Lower leg skin (tissue), 4 donors: ENCODE measurements at regions of chr12 and their contacts with region 1.

Region 1: DNA sequence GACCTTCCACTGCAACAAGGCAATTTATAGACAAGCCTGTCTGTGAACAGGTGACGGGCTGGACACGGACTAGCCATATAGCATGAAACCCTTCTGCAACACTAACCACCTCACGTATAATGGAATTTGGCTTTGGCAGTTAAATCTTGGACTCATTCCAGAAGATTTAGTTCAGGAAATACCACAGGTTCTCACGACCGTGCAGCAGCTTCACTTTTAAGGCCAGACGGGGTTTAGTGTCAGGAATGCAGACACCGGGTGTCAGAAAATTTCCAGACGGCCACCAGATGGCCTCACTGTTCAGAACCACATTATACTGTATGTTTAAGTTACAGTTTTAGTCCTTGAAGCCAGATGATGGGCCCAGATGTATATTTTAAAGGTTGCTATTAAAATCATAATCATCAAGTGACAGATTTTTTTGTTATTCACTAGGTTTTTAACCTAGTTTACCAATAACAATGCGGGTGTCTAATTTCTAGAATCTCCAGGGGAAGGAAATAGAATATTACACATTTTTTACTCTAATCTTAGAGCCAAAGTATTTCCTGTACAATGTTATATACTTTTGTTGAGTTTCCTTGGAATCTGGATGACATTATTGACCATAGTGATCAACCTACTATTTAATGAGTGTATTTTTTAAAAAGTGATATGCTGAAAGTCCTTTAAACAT is 90.5 kb upstream of the TMPO start:
- DNase-seq: no peak
- H3K4me3 ChIP-seq: no peak overlapping the region
- CTCF ChIP-seq: no peak
- POLR2A ChIP-seq: no peak

Region 2: GRCh38 chr12:98516184-98516873 is 91.5 kb after region 1 on chr12:
- intact Hi-C with region 1: loop called (anchors 10 kb)
- DNase-seq: peak; percentile 52 to 91
- H3K4me3 ChIP-seq: peak overlapping the region; percentile 83
- CTCF ChIP-seq: peak in 1 of 3 donors; percentile 45
- POLR2A ChIP-seq: no peak

Region 3: GRCh38 chr12:98559666-98560065 is 134.8 kb after region 1 on chr12:
- intact Hi-C with region 1: no loop called
- DNase-seq: no peak
- H3K4me3 ChIP-seq: no peak overlapping the region
- CTCF ChIP-seq: no peak
- POLR2A ChIP-seq: no peak